ENCODE measurements at regions of chr6 and their contacts with region 1.

Region 1: DNA sequence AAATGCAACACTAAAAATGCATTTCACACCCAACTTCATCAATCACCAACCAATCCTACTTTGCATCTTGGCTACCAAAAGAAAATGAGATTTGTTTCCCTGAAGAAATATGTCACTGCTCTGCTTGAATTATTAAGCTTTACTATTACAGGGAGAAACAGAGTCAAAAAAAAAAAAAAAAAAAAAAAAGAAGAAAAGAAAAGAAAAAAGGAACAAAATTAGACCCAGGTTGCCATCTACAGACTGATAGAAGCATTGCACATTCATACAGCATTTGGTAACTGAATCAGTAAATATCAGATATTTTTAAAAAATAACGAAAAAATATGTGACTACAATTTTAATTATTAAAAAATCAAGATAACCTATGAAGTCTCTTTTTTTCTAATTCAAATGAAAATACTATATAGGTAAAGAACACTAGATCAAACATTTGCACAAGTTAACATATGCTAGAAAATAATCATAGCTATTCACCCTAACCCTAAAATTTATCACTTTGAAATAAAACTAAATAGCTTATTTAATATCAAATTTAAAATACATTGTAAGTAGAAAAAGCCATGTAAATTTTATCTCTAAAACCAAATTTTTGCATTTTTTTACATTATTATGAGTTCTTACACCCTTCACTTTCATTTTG is 83.3 kb downstream of the DCDC2 start:
- DNase-seq: peak; percentile 23
- ATAC-seq: no peak
- H3K4me3 ChIP-seq: no peak overlapping the region
- H3K27ac ChIP-seq: no peak overlapping the region
- H3K4me1 ChIP-seq: no peaks in the 10 kb centered on the region
- H3K27me3 ChIP-seq: no peaks in the 10 kb centered on the region
- CTCF ChIP-seq: peak; percentile 52
- POLR2A ChIP-seq: no peak
- RAD21 ChIP-seq: peak; percentile 35; the same call in 1 of the 2 replicates

Region 2: DNA sequence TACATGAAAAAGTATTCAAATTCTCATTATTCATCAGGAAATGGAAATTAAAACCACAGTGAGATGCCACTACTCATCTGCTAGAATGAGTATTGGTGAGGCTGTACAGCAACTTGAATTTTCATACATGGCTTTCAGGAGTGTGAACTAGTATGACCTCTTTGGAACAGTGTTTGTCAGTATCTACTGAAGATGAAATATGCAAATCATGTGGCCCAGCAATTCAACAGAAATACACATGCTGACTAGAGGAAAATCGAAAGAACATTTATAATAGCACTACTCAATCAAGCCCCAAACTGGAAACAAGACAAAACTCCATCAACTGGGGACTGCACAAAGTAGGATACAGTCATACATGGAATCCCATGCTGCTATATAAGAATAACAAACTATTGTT is 18.9 kb before region 1 on chr6:
- CTCF ChIA-PET with region 1: no interaction called
- POLR2A ChIA-PET with region 1: interaction called, 12 read pairs
- dilution Hi-C with region 1: no loop called
- in situ Hi-C with region 1: no loop called
- intact Hi-C with region 1: no loop called
- DNase-seq: no peak
- ATAC-seq: no peak
- H3K4me3 ChIP-seq: no peak overlapping the region
- H3K27ac ChIP-seq: no peak overlapping the region
- H3K4me1 ChIP-seq: no peaks in the 10 kb centered on the region
- H3K27me3 ChIP-seq: no peaks in the 10 kb centered on the region
- CTCF ChIP-seq: no peak
- POLR2A ChIP-seq: no peak
- RAD21 ChIP-seq: no peak

Region 3: DNA sequence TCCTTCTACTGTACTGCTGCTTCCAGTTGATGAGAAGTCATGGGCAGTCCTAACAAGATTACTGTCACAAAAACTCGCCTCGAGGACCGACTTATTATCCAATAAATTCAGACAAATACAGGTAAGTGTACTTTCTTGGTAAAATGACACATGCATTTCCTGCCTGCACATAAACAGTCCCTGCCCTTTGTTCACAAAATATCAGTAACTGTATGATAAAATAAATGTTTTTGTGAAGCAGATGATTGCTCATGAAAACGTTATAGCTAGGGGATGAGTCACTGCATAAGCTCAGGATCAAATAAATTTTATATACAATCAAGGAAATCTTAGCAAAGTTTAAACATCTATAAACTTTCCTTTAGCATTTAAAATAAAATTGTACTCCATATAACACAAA is 825.7 kb after region 1 on chr6:
- CTCF ChIA-PET with region 1: no interaction called
- POLR2A ChIA-PET with region 1: no interaction called
- dilution Hi-C with region 1: no loop called
- in situ Hi-C with region 1: no loop called
- intact Hi-C with region 1: no loop called
- DNase-seq: peak; percentile 60
- ATAC-seq: peak; percentile 69
- H3K4me3 ChIP-seq: no peak overlapping the region
- H3K27ac ChIP-seq: no peak overlapping the region
- H3K4me1 ChIP-seq: peaks cover 3% of the 10 kb centered on the region
- H3K27me3 ChIP-seq: no peaks in the 10 kb centered on the region
- CTCF ChIP-seq: no peak
- POLR2A ChIP-seq: no peak
- RAD21 ChIP-seq: no peak

Measured in IMR-90 (cell line).